ENCODE measurements at regions of chr15 and their contacts with region 1.

Region 1: DNA sequence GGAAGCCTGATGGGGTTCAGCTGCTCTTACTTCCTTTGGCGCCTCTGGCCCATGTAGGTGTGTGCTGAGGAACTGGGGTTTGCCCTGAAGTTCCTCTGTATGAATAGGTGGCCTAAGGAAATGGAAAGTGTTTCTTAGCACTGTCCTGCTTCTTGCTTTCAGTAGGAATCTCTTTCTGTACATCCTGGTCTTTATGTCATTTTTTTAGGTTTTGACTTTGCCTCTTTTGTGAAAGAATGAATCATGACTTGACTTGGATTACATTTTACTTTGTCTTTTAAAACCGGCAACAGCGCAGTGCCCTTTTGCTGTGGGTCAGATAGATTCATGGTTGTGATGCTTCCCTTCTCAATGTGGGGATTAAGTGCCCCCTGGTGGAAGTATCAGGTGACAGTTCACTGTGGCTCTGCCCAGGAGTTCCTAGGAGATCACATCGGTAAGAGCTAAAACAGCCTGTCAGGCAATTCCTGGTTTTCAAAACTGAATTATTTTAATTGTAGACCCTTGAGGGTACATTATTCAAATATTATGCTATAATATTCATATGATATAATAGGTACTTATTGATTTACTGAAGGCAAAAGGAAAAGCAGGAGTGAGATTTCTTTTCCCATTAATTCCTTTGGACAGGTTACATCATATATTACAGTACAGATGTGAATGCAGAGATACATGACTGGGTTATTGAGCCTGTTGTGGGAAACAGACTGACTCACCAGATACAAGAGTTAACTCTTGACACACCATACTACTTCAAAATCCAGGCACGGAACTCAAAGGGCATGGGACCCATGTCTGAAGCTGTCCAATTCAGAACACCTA is 95.4 kb downstream of the HCN4 start:
- DNase-seq: peak; percentile 52
- H3K4me3 Mint-ChIP-seq: no peak overlapping the region
- H3K27ac Mint-ChIP-seq: no peak overlapping the region
- H3K4me1 Mint-ChIP-seq: peaks cover 2% of the 10 kb centered on the region
- H3K27me3 Mint-ChIP-seq: no peaks in the 10 kb centered on the region

Region 2: GRCh38 chr15:73240866-73241499 is 32.4 kb before region 1 on chr15:
- CTCF ChIA-PET with region 1: interaction called, 38 read pairs
- POLR2A ChIA-PET with region 1: no interaction called
- DNase-seq: peak; percentile 82
- H3K4me3 Mint-ChIP-seq: no peak overlapping the region
- H3K27ac Mint-ChIP-seq: no peak overlapping the region
- H3K4me1 Mint-ChIP-seq: peaks cover 19% of the 10 kb centered on the region
- H3K27me3 Mint-ChIP-seq: no peaks in the 10 kb centered on the region

Region 3: GRCh38 chr15:73249499-73249898 is 23.9 kb before region 1 on chr15:
- CTCF ChIA-PET with region 1: interaction called, 38 read pairs
- POLR2A ChIA-PET with region 1: no interaction called
- DNase-seq: no peak
- H3K4me3 Mint-ChIP-seq: no peak overlapping the region
- H3K27ac Mint-ChIP-seq: no peak overlapping the region
- H3K4me1 Mint-ChIP-seq: no peaks in the 10 kb centered on the region
- H3K27me3 Mint-ChIP-seq: no peaks in the 10 kb centered on the region

Region 4: DNA sequence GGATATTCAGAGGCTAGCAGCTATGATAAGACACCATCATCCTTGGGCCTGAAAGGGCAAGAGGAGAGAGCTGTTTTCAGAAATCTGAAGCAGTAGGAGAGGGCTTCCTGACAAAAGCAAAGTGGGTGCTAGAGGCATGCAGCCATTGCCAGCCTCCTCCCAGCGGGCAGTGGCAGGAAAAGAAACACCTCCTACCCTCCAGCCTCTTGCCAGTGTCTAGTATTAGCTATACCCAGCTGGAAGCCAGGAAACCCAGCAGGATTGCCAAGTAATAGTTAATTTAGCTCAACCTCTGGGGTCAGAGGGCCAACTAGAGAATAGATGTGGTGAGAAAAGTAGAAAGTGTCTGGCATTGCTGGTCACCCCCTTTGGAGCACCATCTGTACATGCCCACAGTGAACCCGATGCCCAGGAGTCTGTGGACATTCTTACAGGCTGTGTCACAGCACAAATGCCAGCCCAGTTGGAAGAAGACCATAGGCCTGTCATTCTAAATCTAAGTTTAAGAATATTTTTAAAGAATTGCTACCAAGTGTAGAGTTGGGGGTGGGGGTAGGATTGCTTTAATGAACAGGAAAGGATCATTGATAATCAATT is 10.1 kb after region 1 on chr15:
- CTCF ChIA-PET with region 1: interaction called, 13 read pairs
- POLR2A ChIA-PET with region 1: interaction called, 3 read pairs
- DNase-seq: no peak
- H3K4me3 Mint-ChIP-seq: no peak overlapping the region
- H3K27ac Mint-ChIP-seq: no peak overlapping the region
- H3K4me1 Mint-ChIP-seq: peaks cover 8% of the 10 kb centered on the region
- H3K27me3 Mint-ChIP-seq: no peaks in the 10 kb centered on the region

Region 5: DNA sequence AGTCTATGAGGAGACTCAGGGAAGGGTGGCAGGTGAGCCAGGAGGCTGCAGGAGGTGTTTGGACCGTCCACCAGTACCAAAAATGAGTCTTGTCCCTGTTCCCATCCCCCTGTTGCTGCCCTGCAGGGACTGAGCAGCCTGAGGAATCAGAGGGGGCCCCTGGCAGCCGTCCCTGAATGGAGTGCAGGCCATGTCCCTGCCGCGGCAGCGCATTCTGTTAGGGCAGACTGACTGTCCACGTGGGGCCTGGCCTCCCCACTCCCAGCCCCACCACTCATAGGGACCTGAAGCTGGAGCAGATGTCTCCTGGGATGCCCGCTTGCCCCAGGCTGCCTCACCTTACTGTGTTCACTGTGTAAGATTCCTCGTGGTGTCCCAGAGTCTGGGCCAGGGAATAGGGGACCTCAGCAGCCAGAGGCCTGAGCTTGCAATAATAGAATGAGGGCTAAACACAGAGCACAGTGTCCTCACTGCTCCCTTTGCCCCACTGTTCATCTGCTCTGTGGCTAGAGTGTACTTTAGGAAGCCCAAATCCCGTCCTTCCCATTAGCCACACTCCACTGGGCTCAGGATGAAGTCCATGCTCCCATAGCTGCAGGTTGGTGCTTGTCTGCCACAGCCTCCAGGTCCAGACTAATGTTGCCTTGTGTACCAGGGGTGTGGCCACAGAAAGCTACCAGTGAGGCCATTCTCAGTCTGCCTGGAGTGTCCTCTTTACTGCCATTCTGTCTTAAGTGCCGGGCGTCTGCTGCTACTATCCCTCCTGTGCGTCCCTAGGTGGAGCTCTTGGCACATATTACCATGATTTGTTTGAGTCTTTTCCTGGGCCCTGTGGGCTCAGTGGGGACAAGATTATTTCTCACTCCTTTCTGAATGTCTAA is 32.2 kb after region 1 on chr15:
- CTCF ChIA-PET with region 1: no interaction called
- POLR2A ChIA-PET with region 1: no interaction called
- DNase-seq: peak; percentile 42
- H3K4me3 Mint-ChIP-seq: no peak overlapping the region
- H3K27ac Mint-ChIP-seq: no peak overlapping the region
- H3K4me1 Mint-ChIP-seq: peaks cover 12% of the 10 kb centered on the region
- H3K27me3 Mint-ChIP-seq: no peaks in the 10 kb centered on the region